ENCODE measurements at regions of chr22 and their contacts with region 1.

Region 1: DNA sequence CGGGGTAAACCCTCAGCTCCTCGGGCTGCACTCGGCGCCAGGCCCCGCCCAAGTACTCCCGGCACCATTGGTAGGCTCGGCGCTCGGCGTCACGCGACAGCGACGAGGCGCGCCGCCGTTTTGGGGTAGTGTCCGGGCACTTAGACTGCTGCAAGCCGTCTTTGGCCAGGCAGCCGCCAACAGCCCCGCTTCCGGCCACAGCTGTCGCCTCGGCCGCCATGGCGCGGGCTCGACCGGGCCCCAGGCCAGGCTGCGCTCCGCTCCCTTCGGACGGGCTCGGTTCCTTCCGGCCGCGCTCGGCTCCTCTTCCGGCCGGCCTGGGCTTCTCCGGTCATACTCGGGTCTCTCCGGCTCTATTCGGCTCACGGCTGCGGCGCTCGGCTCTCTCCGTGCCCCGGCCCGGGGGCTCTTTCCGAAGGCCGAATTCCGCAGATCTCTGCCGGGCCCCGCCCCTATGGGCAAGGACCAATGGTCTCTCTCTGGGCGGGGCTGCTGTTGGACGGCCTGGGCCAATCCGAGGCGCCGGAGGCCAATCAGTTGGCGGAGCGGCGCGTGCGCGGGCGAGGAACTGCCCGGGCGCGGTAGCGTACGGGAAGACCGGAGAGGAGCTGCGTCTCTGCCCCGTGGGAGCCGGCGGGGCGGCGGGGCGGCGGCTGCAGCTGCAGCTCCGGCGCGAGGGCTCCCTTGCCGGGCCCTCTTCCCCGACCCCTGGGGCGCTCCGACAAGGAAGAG is at the start of gene CHKB:
- DNase-seq: peak; percentile 92 to 99
- H3K4me3 ChIP-seq: peak within 1 kb of the TSS; percentile 65 to 82
- H3K27ac ChIP-seq: peak within 1 kb of the TSS; percentile 95 to 99
- H3K4me1 ChIP-seq: peaks cover 7 to 23% of the 10 kb centered on the region in 2 donors
- H3K27me3 ChIP-seq: peaks cover 5% of the 10 kb centered on the region
- CTCF ChIP-seq: no peak
- total RNA-seq, gene CHKB: 82.4 TPM

Region 2: GRCh38 chr22:50250555-50251476 is 331.9 kb before region 1 on chr22 and contains the start of gene HDAC10:
- intact Hi-C with region 1: no loop called
- DNase-seq: peak in 1 of 2 donors; percentile 87
- H3K4me3 ChIP-seq: peak within 1 kb of the TSS; percentile 57 to 82
- H3K27ac ChIP-seq: peak within 1 kb of the TSS; percentile 66 to 71
- H3K4me1 ChIP-seq: peaks cover 11 to 22% of the 10 kb centered on the region in 2 donors
- H3K27me3 ChIP-seq: no peaks in the 10 kb centered on the region
- CTCF ChIP-seq: no peak
- total RNA-seq, gene HDAC10: 73.2 TPM

Region 3: DNA sequence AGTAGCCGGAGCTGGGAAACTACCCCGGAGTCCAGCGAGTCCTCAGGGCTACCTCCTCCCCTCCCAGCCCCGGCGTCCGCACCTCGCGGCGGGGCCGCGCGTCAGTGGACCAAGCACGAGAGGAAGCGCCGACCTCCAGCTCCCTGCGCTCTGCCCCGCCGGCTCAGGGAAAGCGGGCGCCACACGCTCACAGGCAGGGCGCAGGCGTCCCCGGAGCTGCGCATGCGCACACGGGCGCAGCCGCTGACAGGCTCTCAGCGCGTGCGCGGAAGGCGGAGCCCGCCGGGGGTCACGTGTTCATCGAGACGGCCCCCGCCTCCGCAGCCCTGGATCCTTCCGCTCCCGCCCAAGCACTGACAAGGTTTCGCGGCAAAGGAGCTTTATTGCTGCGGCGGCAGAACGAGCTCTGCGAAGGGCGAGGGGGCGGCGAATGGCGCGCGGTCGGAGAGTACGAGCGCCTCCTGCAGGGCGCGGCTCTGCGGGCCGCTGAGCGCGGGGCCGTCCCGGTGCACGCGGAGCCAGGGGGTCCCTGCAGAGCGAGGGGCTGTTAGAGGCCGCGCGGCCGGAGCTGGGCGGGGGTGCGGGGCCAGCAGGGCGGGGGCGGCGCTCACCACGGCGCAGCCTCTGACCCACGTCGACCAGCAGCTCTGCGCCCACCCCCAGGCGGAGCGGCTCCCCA is 57.2 kb before region 1 on chr22 and contains the start of gene SCO2:
- intact Hi-C with region 1: loop called (anchors 1 kb)
- DNase-seq: peak; percentile 77 to 97
- H3K4me3 ChIP-seq: peak within 1 kb of the TSS; percentile 75 to 79
- H3K27ac ChIP-seq: peak within 1 kb of the TSS; percentile 85 to 93
- H3K4me1 ChIP-seq: peaks cover 6 to 20% of the 10 kb centered on the region in 2 donors
- H3K27me3 ChIP-seq: no peaks in the 10 kb centered on the region
- CTCF ChIP-seq: peak; percentile 47 to 54 (median 54)
- total RNA-seq, gene SCO2: not detected

Region 4: DNA sequence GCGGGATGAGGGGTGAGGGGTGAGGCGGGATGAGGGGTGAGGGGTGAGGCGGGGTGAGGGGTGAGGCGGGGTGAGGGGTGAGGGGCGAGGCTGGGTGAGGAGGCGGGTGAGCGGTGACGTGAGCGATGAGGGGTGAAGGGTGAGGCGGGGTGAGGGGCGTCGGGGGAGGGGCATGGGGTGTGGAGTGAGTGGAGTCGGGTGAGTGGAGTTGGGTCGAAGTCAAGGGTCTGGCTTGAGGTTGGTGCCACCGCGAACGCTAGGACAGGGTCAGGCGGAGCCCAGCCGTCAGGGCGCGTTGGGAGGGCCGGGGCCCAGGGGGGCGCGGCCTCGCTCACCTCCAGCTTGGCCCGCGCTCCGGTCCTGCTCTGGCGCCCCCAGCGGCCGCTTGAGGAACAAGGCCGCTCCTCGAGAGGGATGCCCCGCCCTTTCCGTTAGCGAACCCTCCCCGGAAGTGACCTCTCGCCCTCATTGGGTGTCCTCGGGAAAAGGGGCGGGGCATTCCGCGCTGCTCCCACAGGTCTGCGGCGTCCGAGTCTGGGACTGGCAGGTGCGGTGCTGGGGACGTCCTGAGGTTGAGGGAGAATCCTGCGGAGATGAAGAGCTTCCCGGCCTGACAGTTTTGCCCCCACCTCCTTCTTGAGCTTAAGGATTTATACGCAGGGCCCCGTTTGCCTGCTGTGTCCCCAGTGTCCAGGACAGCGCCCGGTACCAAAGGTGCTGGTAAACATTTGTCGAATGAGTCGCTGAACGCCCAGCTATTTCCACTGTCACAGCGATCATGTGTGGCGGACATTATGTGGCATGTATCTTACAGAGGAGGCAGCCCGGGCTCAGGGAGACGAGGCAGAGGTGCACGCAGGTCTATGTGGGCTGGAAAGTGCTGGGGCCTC is 20.0 kb before region 1 on chr22 and contains the start of gene SYCE3:
- intact Hi-C with region 1: loop called (anchors 1 kb)
- DNase-seq: peak; percentile 87 to 97
- H3K4me3 ChIP-seq: peak within 1 kb of the TSS; percentile 66 to 70
- H3K27ac ChIP-seq: no peak within 1 kb of the TSS
- H3K4me1 ChIP-seq: peaks cover 0 to 8% of the 10 kb centered on the region in 2 donors
- H3K27me3 ChIP-seq: no peaks in the 10 kb centered on the region
- CTCF ChIP-seq: peak; percentile 91 to 99 (median 98)
- total RNA-seq, gene SYCE3: not detected

Region 5: DNA sequence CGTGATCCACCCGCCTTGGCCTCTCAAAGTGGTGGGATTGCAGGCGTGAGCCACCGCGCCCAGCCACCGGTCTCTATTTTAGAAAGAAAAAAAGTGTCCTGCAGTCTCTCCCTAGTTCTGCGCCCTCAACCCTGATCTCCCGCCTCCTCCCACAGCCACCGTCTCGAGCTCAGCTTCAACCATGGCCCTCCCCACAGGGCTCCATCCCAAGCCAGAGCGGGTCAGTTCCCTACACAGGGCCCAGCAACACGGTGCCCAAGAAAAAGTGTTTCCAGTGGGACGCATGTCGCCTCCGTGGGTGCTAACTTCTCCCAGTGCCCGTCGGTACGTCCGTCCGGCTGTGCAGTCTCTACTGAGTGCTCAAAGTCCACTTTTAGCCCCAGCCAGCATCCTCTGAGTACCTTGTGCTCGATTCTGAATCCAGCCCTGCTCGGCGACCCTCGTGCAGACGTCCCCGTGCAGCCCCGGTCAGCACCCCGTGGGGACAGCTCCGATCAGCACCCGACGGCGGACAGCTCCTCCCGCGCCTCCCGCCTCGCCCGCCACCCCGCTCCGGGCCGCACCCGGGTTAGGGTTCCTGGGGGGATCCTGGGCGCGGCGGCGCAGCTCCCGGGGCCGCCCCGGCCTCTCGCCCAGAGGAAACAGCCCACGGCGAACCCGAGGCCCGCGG is 17.2 kb after region 1 on chr22:
- intact Hi-C with region 1: no loop called
- DNase-seq: no peak
- H3K4me3 ChIP-seq: peak overlapping the region; percentile 48 to 60
- H3K27ac ChIP-seq: no peak overlapping the region
- H3K4me1 ChIP-seq: peaks cover 4 to 6% of the 10 kb centered on the region in 2 donors
- H3K27me3 ChIP-seq: peaks cover 16% of the 10 kb centered on the region
- CTCF ChIP-seq: no peak

Region 6: GRCh38 chr22:50627642-50628542 is 45.2 kb after region 1 on chr22 and contains the start of gene ARSA:
- intact Hi-C with region 1: loop called (anchors 2 kb)
- DNase-seq: peak; percentile 27 to 86
- H3K4me3 ChIP-seq: peak within 1 kb of the TSS; percentile 63 to 67
- H3K27ac ChIP-seq: peak within 1 kb of the TSS; percentile 46 to 84
- H3K4me1 ChIP-seq: peaks cover 4 to 12% of the 10 kb centered on the region in 2 donors
- H3K27me3 ChIP-seq: no peaks in the 10 kb centered on the region
- CTCF ChIP-seq: peak; percentile 1 to 47 (median 18)
- total RNA-seq, gene ARSA: 111 TPM

Measured in ascending aorta (tissue), 2 donors.